H1 (cell line): ENCODE measurements at regions of chr19 and their contacts with region 1.

Region 1: DNA sequence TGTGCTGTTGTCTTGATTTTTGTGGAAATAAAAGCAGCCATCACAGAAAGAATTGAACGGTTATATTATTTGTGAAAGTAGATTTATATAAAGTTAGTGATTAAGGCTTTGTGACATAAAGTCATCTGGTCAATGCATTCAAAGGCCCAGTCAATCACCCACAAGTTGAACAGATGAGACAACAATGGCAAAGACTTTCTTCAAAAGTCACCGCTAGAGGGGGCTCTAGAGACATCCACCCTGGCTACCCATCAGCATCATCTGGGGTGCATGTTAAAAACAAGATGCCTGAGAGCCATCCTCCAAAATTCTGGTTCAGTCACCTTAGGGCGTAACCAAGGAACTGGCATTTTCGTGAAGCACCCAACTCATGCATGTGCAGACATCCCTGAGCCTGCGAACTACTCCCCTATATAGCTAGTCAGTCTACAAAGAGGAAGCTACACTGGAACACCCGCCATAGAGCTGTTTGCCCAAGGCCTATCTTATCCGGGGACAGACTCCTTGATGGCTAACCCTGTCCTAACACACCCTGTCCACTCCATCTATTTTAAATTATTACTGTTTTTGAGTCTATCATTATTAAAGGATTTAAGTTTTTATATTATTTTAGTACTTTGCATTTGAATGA is 970.5 kb downstream of the UQCRFS1 start:
- DNase-seq: peak in 1 of 2 experiments; percentile 75
- H3K4me3 ChIP-seq: no peak overlapping the region
- H3K27ac ChIP-seq: no peak overlapping the region
- H3K4me1 ChIP-seq: peaks cover 0 to 6% (median 1%) of the 10 kb centered on the region in 4 experiments; a peak in 2 of 7 replicates
- H3K27me3 ChIP-seq: no peaks in the 10 kb centered on the region
- CTCF ChIP-seq: peak; percentile 28 to 81 (median 77)
- EP300 ChIP-seq: no peak
- POLR2A ChIP-seq: no peak
- RAD21 ChIP-seq: peak; percentile 79 to 87

Region 2: GRCh38 chr19:27974082-27974513 is 268.3 kb before region 1 on chr19:
- CTCF ChIA-PET with region 1: interaction called, 67 read pairs
- POLR2A ChIA-PET with region 1: no interaction called
- DNase-seq: peak in 1 of 2 experiments; percentile 52
- H3K4me3 ChIP-seq: no peak overlapping the region
- H3K27ac ChIP-seq: no peak overlapping the region
- H3K4me1 ChIP-seq: peaks cover 0 to 5% (median 2%) of the 10 kb centered on the region in 4 experiments; a peak in 2 of 7 replicates
- H3K27me3 ChIP-seq: no peaks in the 10 kb centered on the region; a peak in 1 of 7 replicates
- CTCF ChIP-seq: peak; percentile 80 to 86 (median 85)
- EP300 ChIP-seq: no peak
- POLR2A ChIP-seq: no peak
- RAD21 ChIP-seq: peak; percentile 97

Region 3: GRCh38 chr19:28213470-28214082 is 28.8 kb before region 1 on chr19:
- CTCF ChIA-PET with region 1: interaction called, 20 read pairs
- POLR2A ChIA-PET with region 1: no interaction called
- DNase-seq: no peak
- H3K4me3 ChIP-seq: no peak overlapping the region
- H3K27ac ChIP-seq: no peak overlapping the region
- H3K4me1 ChIP-seq: peaks cover 0 to 4% (median 2%) of the 10 kb centered on the region in 4 experiments; a peak in 4 of 7 replicates
- H3K27me3 ChIP-seq: no peaks in the 10 kb centered on the region
- CTCF ChIP-seq: no peak
- EP300 ChIP-seq: no peak
- POLR2A ChIP-seq: no peak
- RAD21 ChIP-seq: no peak

Region 4: GRCh38 chr19:28257396-28257795 is 15.0 kb after region 1 on chr19:
- CTCF ChIA-PET with region 1: interaction called, 15 read pairs
- POLR2A ChIA-PET with region 1: no interaction called
- DNase-seq: no peak
- H3K4me3 ChIP-seq: no peak overlapping the region
- H3K27ac ChIP-seq: no peak overlapping the region
- H3K4me1 ChIP-seq: no peaks in the 10 kb centered on the region
- H3K27me3 ChIP-seq: no peaks in the 10 kb centered on the region; a peak in 1 of 7 replicates
- CTCF ChIP-seq: no peak
- EP300 ChIP-seq: no peak
- POLR2A ChIP-seq: no peak
- RAD21 ChIP-seq: no peak

Region 5: DNA sequence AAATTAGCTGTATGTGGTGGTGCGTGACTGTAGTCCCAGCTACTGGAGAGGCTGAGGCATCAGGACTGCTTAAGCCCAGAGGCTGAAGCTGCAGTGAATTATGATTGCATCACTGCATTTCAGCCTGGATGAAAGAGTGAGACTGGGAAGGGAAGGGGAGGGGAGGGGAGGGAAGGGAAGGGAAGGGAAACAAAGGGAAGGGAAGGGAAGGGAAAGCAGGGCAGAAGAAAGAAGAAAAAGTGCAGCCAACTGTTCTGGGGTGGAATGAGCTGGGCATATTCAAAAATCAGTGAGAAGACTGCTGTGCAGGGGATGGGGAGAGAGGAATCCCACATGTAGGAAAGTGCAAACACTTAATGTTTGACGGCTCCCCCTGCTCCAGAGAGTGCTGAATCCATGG is 65.1 kb after region 1 on chr19:
- CTCF ChIA-PET with region 1: interaction called, 289 read pairs
- POLR2A ChIA-PET with region 1: no interaction called
- DNase-seq: no peak
- H3K4me3 ChIP-seq: no peak overlapping the region
- H3K27ac ChIP-seq: no peak overlapping the region
- H3K4me1 ChIP-seq: peaks cover 0 to 2% (median 0%) of the 10 kb centered on the region in 4 experiments; a peak in 1 of 7 replicates
- H3K27me3 ChIP-seq: no peaks in the 10 kb centered on the region
- CTCF ChIP-seq: no peak
- EP300 ChIP-seq: no peak
- POLR2A ChIP-seq: no peak
- RAD21 ChIP-seq: no peak

Region 6: DNA sequence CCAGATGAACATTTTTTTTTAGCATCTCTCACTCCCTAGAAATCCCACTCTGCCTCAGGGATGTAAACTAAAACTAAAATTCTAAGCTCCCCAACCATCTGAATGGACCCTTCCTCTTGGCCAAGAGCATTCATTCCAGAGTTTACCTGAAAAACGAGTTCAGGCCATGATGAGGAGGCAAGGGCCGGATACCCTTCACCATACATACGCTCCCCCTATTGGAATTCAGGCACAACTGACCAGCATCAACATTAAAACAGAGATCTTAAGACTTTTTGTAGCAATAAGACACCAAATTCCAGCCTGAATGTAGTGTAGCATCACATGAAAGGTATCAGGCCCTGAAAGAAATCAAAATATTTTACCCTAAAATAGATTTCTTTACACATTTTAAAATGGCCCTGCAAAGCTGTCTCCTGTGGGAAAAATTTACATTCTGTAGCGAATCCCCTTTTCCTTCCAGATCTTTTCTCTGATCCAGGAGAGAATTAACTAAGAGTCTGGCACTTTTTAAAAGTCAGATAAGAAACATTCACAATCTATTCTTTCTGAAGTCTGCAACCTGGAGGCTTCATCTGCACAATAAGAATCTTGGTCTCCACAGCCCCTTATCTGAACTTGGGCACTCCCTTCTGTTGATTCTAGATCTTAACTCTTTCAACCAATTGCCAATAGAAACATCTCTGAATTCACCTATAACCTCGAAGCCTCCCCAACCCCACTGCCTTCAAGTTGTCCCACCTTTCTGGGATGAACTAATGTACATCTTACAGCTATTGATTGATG is 82.1 kb after region 1 on chr19:
- CTCF ChIA-PET with region 1: interaction called, 289 read pairs
- POLR2A ChIA-PET with region 1: no interaction called
- DNase-seq: no peak
- H3K4me3 ChIP-seq: no peak overlapping the region
- H3K27ac ChIP-seq: no peak overlapping the region
- H3K4me1 ChIP-seq: peaks cover 0 to 6% (median 5%) of the 10 kb centered on the region in 4 experiments; a peak in 3 of 7 replicates
- H3K27me3 ChIP-seq: no peaks in the 10 kb centered on the region
- CTCF ChIP-seq: peak; percentile 39 to 67 (median 63)
- EP300 ChIP-seq: no peak
- POLR2A ChIP-seq: no peak
- RAD21 ChIP-seq: peak; percentile 64 to 69

Region 7: DNA sequence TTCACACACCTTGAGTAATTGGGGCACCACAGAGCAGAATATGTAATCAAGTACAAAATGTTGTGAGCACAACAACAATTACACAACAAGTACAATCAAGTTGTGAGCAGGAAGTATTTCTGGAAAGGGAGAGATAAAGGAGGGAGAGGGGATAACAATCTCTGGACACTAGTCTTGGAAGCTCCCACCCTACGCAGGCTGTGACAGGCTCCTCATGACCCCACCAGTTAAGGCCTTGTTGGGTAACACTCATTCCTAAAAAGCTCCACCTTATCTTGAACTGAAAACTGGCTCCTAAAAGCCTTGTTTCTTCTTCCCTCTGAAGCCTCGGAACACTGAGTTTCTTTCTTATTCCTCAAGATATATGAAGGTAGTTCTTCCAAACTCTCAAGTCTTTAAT is 164.6 kb after region 1 on chr19:
- CTCF ChIA-PET with region 1: no interaction called
- POLR2A ChIA-PET with region 1: no interaction called
- DNase-seq: no peak
- H3K4me3 ChIP-seq: no peak overlapping the region
- H3K27ac ChIP-seq: no peak overlapping the region
- H3K4me1 ChIP-seq: peaks cover 0 to 4% (median 2%) of the 10 kb centered on the region in 4 experiments; a peak in 2 of 7 replicates
- H3K27me3 ChIP-seq: no peaks in the 10 kb centered on the region; a peak in 1 of 7 replicates
- CTCF ChIP-seq: no peak
- EP300 ChIP-seq: no peak
- POLR2A ChIP-seq: no peak
- RAD21 ChIP-seq: no peak